IMR-90 (cell line): ENCODE measurements at regions of chr6 and their contacts with region 1.

Region 1: DNA sequence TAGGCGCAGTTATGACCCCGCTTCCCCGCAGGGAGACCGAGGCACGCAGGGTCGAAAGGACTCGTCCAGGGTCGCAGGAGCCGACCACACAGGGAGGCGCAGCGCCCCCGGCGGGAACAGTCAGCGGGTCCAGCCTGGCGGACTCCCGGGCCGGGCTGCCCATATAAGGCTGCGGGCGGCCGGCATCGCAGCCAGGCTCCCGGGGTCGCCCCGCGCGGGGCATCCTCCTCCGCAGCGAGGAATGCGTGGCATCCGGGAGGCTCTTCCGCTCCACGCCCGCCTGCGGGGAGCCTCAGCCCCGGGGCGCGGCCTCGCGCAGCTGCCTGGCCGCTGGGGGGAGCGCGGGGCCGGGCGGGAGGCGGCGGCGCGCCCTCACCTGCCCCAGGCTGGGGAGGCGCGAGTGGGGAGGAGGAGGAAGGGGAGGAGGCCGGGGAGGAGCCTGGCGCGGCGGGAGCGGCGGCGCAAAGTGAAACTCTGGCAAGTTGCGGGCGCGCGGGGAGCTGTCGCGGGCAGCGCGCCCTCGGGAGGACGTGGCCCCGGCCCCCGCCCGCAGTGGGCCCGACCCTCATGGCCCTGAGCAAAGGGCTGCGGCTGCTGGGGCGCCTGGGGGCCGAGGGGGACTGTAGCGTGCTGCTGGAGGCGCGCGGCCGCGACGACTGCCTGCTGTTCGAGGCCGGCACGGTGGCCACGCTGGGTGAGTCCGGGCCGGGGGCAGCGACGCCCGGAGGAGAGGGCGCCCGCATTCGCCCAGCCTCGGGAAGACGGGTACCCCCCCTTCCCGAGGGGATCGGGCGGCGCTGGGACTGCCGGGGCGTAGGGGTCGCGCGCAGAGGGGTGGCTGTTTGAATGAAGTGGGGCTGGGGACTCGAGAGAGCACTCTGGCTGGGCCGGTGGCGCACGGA is at the start of gene SYNJ2:
- DNase-seq: peak; percentile 83
- ATAC-seq: peak; percentile 92
- H3K4me3 ChIP-seq: peak within 1 kb of the TSS; percentile 73
- H3K27ac ChIP-seq: peak within 1 kb of the TSS; percentile 65
- H3K4me1 ChIP-seq: peaks cover 31% of the 10 kb centered on the region
- H3K27me3 ChIP-seq: no peaks in the 10 kb centered on the region
- CTCF ChIP-seq: peak; percentile 47
- POLR2A ChIP-seq: peak; percentile 78
- RAD21 ChIP-seq: 0 out of 2 replicates have a peak, but pooled peaks have one; percentile 2
- total RNA-seq, gene SYNJ2: 43.3 and 45.2 TPM in 2 replicates

Region 2: DNA sequence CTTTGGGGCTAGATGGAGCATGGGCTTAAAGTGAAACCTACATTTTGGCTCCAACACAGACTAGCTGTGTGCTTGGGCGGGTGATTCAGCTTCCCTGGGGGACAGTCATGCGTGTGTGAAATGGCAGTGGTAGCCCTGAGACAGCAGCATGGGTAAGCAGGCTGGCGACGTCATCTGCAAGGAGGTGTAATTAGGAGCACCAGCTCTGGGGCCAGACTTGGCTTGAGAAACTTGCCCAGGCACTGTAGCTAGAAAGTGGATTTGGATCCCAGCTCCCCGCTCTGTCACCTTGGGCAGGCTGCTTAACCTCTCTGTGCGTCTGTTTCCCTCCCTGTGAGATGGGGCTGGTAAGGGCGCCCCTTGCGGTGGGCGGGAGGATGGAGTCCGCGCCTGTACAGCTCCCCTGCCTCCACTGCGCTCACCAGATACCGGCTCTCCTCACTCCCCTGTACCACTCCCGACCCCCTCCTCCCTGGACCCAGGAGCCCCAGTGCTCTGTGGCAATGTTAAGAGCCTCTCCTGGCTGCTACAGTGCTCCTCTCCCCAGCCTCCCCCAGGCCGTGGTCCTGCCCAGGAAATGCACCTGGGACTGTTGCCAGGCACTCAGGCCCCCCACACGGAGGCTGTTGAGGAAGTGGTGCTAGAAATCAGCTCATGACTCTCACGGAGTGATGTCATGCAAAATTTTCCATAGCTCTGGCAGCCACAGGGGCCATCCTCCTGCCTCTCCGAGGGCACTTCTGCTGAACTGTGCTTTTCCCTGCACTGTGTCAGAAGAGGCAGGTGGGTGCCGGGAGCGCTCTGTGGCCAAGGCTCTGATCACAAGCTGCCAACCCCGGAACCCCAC is 44.6 kb after region 1 on chr6:
- CTCF ChIA-PET with region 1: no interaction called
- POLR2A ChIA-PET with region 1: interaction called, 3 read pairs
- dilution Hi-C with region 1: no loop called
- in situ Hi-C with region 1: no loop called
- intact Hi-C with region 1: loop called (anchors 2 kb)
- DNase-seq: peak; percentile 99
- ATAC-seq: peak; percentile 70
- H3K4me3 ChIP-seq: no peak overlapping the region
- H3K27ac ChIP-seq: peak overlapping the region; percentile 93
- H3K4me1 ChIP-seq: peaks cover 36% of the 10 kb centered on the region
- H3K27me3 ChIP-seq: no peaks in the 10 kb centered on the region
- CTCF ChIP-seq: peak; percentile 42
- POLR2A ChIP-seq: peak; percentile 62; the same call in 1 of the 2 replicates
- RAD21 ChIP-seq: peak; percentile 3; the same call in 1 of the 2 replicates